ENCODE measurements at regions of chr9 and their contacts with region 1.

Region 1: DNA sequence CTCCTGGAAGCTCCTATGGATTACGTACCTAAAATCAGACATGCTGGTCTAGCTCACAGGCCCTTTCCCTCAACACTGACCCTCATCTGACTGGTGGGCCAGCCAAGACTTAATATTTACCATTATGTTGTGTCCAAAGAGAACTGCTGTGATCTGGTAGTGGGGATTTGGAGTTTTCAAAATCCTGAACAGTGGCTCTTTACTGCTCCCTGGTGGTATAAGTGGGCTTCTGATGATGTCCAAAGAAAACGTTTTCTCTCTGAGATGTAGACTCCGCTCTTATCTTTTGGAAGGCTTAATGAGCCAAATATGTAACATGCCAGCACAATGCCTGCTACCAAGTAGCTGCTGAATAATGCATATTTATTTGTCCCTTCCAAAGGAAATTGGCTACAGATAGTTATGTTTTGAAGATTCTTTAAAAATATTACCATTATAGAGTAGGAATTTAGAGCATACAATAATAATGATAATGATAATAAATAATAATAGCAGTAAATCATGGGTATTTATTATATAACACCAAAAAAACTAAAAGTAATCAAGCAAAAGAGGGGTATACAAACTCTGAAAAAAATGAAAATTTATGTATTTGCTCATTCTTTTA is 406.6 kb upstream of the TNC start:
- DNase-seq: no peak
- H3K4me3 Mint-ChIP-seq: no peak overlapping the region
- H3K27ac Mint-ChIP-seq: no peak overlapping the region
- H3K4me1 Mint-ChIP-seq: no peaks in the 10 kb centered on the region
- H3K27me3 Mint-ChIP-seq: peaks cover 11% of the 10 kb centered on the region

Region 2: DNA sequence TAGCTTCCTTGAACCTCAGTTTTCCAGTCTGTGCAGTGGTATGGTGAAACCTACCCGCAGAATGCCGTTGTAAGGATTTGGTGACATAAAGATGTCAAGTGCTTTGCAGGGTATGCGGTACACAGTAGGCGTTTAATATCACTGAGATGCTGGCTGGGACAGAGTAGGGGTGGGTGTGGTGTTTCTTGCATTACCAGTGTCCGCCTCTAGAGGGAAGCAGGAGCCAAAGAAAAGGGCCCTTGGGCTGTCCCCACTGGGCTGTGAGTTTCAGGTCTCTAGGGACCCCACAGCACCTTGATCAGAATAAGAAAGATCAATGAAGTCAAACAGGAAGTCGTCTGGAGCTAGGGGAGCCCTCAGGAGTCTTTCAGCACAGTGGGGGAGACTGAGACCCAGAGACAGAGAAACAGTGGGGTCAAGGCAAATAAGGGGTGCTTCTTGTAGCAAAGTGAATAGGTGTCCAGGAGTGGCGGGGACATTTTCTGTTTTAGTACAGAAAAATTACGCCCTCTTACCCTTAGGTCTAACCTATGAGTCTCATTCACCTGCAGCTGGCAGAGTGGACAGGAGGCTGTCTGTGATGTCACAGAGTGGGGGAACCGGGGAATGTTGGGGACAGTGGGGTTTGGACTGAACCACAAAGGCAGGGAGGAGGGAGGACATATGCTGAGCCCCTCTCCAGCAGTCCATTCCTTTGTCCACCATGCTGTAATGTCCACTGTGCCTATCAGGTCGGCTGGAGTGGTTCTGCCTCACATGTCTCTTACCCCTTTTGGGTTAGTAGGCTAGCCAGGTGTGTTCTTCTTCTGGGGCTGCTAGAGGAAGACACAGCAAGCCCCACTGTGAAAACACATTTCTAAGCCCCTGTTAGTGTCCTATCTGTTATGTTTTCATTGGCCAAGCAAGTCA is 862.2 kb before region 1 on chr9:
- CTCF ChIA-PET with region 1: interaction called, 3 read pairs
- POLR2A ChIA-PET with region 1: no interaction called
- intact Hi-C with region 1: loop called (anchors 5 kb)
- DNase-seq: peak; percentile 74
- H3K4me3 Mint-ChIP-seq: no peak overlapping the region
- H3K27ac Mint-ChIP-seq: no peak overlapping the region
- H3K4me1 Mint-ChIP-seq: peaks cover 10% of the 10 kb centered on the region
- H3K27me3 Mint-ChIP-seq: peaks cover 7% of the 10 kb centered on the region

Region 3: GRCh38 chr9:114738581-114739316 is 785.8 kb before region 1 on chr9:
- CTCF ChIA-PET with region 1: no interaction called
- POLR2A ChIA-PET with region 1: no interaction called
- intact Hi-C with region 1: loop called (anchors 5 kb)
- DNase-seq: peak; percentile 81
- H3K4me3 Mint-ChIP-seq: no peak overlapping the region
- H3K27ac Mint-ChIP-seq: peak overlapping the region; percentile 81
- H3K4me1 Mint-ChIP-seq: peaks cover 52% of the 10 kb centered on the region
- H3K27me3 Mint-ChIP-seq: no peaks in the 10 kb centered on the region

Measured in activated CD4-positive, alpha-beta memory T cell treated with anti-CD3 and anti-CD28 coated beads for 36 hours (primary cell).